Activated naive CD4-positive, alpha-beta T cell treated with anti-CD3 and anti-CD28 coated beads for 36 hours (primary cell): ENCODE measurements at regions of chr10 and their contacts with region 1.

Region 1: DNA sequence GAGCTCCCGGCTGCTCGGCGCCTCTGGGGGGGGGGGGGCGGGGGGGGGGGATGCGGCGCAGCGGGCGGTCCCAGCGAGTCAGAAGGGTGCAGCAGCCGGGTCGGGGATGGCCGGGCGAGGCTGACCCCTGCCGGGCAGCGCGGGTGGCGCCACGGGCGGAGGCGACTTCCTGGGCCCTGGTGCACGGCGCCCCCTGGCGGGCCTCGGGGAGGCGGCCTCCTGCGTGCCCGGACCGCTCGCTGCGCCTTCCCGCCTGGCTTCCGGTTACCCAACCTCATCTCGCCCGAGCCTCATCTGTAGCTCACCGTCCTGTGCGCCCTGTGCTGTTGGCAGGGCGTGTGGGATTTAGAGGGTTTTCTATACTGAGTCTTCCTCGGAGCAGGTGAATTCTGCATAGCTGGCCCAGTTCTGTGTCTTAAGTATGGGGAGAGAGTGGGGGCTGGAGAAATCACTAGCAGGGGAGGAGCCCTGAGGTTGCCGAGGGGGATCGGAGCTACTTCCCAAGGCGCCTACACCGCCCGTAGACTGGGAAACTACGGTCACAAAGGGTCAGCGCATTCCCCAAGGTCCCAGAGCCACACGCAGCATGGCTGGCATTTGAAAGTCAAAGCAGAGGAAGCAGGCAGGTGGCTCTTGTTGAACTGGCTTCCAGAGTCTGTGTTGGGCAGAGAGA is 28.3 kb upstream of the WDFY4 start:
- DNase-seq: peak; percentile 91
- H3K4me3 Mint-ChIP-seq: peak overlapping the region; percentile 76
- H3K27ac Mint-ChIP-seq: no peak overlapping the region
- H3K4me1 Mint-ChIP-seq: peaks cover 4% of the 10 kb centered on the region
- H3K27me3 Mint-ChIP-seq: peaks cover 23% of the 10 kb centered on the region

Region 2: DNA sequence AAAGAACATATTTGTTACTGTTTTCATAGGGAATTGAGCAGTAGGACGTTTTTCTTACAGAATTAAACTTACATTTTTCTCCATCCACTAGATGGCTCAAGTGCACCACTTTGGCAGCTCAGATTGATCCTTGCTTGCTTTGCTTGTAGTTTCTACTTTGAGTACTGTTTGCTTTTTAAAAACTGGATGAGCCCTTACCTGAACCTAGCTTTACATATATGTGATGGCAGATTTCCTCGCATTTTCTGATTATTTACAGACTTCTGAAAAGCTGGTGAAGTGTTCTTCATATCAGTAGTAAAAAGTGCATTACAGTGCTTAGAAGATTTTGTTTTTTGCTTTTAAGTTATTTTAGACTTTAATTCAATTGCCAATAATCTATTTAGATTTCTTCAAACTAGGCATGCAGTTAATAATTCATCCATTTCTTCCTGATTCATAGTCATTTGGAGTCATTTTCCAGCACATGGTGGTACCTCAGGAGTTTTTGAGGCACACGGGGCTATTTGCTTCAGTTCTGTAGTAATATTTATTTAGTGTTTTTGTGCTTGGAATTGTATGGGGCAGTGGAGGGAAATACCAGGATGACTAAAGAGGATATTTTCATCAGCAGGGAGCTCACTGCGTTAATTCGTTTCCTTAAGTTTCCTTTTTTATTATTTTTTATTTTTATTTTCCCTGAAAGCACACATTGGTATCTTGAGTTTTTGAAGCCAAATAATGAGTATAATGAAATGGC is 292.6 kb before region 1 on chr10:
- CTCF ChIA-PET with region 1: interaction called, 47 read pairs
- intact Hi-C with region 1: loop called (anchors 1 kb)
- DNase-seq: peak; percentile 58
- H3K4me3 Mint-ChIP-seq: no peak overlapping the region
- H3K27ac Mint-ChIP-seq: no peak overlapping the region
- H3K4me1 Mint-ChIP-seq: peaks cover 12% of the 10 kb centered on the region
- H3K27me3 Mint-ChIP-seq: no peaks in the 10 kb centered on the region

Region 3: GRCh38 chr10:48614481-48615390 is 41.6 kb before region 1 on chr10:
- CTCF ChIA-PET with region 1: interaction called, 11 read pairs
- intact Hi-C with region 1: no loop called
- DNase-seq: no peak
- H3K4me3 Mint-ChIP-seq: no peak overlapping the region
- H3K27ac Mint-ChIP-seq: no peak overlapping the region
- H3K4me1 Mint-ChIP-seq: no peaks in the 10 kb centered on the region
- H3K27me3 Mint-ChIP-seq: peaks cover 38% of the 10 kb centered on the region

Region 4: DNA sequence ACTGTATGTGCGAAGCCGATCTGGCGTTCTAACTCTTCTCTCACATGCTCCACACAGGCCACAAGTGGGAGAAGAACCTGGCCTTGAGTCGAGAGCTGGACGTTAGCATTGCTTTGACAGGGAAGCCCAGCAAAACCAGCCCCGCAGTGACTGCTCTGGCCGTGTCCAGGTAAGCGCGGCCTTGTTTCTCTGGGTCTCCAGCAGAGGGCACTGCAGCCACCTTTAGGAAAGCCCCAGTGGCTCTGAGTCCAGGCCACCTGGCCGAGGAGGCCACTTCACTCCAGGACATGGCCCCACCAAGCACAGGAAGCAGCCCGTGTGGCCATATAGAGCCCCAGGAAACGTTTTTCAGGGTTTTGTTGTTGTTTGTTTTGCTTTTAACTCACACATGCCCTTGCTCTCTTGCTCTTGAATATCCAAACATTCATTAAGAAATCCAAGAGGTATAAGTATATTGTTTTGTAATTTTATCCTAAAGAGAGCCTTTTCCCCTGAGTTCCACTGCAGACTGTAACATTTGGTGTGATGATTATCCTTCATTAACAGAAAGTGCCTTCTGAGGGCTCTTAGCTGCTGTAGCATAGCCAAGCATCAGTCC is 325.0 kb after region 1 on chr10:
- CTCF ChIA-PET with region 1: no interaction called
- intact Hi-C with region 1: loop called (anchors 5 kb)
- DNase-seq: peak; percentile 45
- H3K4me3 Mint-ChIP-seq: no peak overlapping the region
- H3K27ac Mint-ChIP-seq: no peak overlapping the region
- H3K4me1 Mint-ChIP-seq: no peaks in the 10 kb centered on the region
- H3K27me3 Mint-ChIP-seq: no peaks in the 10 kb centered on the region

Region 5: GRCh38 chr10:49512121-49512809 is 855.9 kb after region 1 on chr10:
- CTCF ChIA-PET with region 1: interaction called, 9 read pairs
- intact Hi-C with region 1: loop called (anchors 1 kb)
- DNase-seq: peak; percentile 19
- H3K4me3 Mint-ChIP-seq: no peak overlapping the region
- H3K27ac Mint-ChIP-seq: no peak overlapping the region
- H3K4me1 Mint-ChIP-seq: peaks cover 21% of the 10 kb centered on the region
- H3K27me3 Mint-ChIP-seq: peaks cover 3% of the 10 kb centered on the region

Region 6: DNA sequence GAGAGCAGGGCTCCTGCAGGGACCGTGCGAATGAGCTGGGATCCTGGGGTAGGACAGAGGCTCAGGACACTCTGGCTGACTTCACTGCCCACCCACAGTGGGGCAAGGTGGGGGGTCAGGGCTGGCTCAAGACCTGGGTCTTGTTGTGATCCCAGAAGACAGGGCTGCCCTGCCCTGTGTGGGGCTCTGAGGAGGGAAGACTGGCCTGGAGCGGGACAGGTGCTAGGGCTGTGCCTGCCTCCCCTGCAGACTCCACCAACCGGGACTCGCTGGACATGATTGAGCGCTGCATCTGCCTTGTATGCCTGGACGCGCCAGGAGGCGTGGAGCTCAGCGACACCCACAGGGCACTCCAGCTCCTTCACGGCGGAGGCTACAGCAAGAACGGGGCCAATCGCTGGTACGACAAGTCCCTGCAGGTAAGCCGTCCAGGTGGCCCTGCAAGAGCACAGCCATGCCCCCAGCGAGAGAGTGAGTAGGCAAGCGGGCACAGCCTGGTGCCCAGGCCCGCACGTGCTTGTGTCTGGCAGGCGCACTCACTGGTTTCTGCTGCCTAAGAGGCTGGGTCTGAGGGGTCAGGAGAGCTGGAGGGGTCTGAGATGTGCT is 990.0 kb after region 1 on chr10:
- CTCF ChIA-PET with region 1: no interaction called
- intact Hi-C with region 1: no loop called
- DNase-seq: no peak
- H3K4me3 Mint-ChIP-seq: no peak overlapping the region
- H3K27ac Mint-ChIP-seq: no peak overlapping the region
- H3K4me1 Mint-ChIP-seq: no peaks in the 10 kb centered on the region
- H3K27me3 Mint-ChIP-seq: peaks cover 13% of the 10 kb centered on the region